Colonic mucosa (tissue), 4 donors: ENCODE measurements at regions of chr10 and their contacts with region 1.

Region 1: DNA sequence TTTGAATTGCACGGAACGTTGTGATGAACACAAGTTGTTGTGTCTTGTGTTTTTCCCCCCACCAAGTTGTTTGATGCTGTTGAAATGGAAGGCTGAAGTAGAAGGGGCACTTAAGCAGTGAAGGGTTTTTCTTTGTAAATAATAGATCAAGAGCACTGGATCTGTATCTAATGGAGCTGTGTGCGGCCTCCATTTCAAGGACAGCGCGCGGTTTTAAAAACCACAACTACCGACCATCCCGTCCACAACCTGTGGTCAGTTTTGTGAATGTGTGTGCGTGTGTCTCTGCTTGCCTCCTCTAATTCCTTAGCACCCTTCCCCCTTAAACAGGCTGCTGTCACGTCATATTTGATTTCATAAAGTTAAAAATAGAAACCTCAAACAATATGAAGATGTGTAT is 165.5 kb downstream of the TCF7L2 start:
- DNase-seq: no peak
- H3K4me3 ChIP-seq: no peak overlapping the region
- H3K27ac ChIP-seq: no peak overlapping the region
- H3K4me1 ChIP-seq: no peaks in the 10 kb centered on the region
- H3K27me3 ChIP-seq: no peaks in the 10 kb centered on the region
- CTCF ChIP-seq: no peak

Region 2: DNA sequence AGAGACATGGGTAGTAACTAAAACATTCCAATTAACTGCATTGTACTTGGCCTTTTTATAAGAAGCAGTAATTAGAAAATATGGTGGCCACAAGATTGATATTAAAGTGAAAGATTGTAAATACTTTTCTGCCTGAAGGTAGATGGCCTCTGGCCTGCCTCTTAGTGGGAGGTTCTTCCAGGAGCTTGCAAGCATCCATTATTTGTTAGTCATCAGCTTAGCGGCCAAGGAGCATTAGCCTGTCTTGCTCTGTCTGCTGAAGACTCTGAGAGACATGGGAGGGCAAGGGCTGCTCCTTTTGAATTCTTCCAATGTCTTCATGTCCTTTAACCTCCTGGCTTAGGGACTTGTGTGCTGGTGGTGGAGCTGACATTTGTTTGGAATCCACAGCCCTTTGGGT is 85.1 kb before region 1 on chr10:
- intact Hi-C with region 1: loop called (anchors 5 kb)
- DNase-seq: no peak
- H3K4me3 ChIP-seq: no peak overlapping the region
- H3K27ac ChIP-seq: no peak overlapping the region
- H3K4me1 ChIP-seq: peaks cover 12% of the 10 kb centered on the region
- H3K27me3 ChIP-seq: no peaks in the 10 kb centered on the region
- CTCF ChIP-seq: no peak

Region 3: DNA sequence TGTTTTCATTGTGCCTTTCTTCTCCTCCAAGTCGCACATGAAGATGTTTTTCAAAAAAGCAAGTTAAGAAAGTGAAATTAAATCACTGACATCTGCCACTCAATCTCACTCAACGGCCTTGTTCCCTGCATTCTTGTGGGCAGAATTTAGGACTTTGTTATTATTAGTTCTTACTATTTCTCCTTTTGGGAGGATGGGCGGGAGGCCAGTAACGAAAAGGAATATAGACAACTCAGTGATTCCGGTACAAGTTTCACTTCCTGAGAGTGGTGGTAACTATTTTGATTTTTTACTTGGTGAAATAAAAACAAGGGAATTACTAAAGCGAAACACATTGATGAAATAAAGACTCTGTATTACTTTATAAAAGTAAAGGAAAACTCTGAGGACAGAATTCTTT is 205.4 kb after region 1 on chr10:
- intact Hi-C with region 1: no loop called
- DNase-seq: no peak
- H3K4me3 ChIP-seq: no peak overlapping the region
- H3K27ac ChIP-seq: no peak overlapping the region
- H3K4me1 ChIP-seq: no peaks in the 10 kb centered on the region
- H3K27me3 ChIP-seq: no peaks in the 10 kb centered on the region
- CTCF ChIP-seq: no peak